ENCODE measurements at regions of chr12 and their contacts with region 1.

Region 1: GRCh38 chr12:109804820-109805761 is 28.1 kb downstream of the TRPV4 start:
- H3K4me3 Mint-ChIP-seq: no peak overlapping the region
- H3K27ac Mint-ChIP-seq: no peak overlapping the region
- H3K4me1 Mint-ChIP-seq: peaks cover 5% of the 10 kb centered on the region
- H3K27me3 Mint-ChIP-seq: peaks cover 4% of the 10 kb centered on the region

Region 2: GRCh38 chr12:109844983-109845823 is 40.1 kb after region 1 on chr12:
- intact Hi-C with region 1: loop called (anchors 1 kb)
- H3K4me3 Mint-ChIP-seq: peak overlapping the region; percentile 52
- H3K27ac Mint-ChIP-seq: no peak overlapping the region
- H3K4me1 Mint-ChIP-seq: peaks cover 61% of the 10 kb centered on the region
- H3K27me3 Mint-ChIP-seq: no peaks in the 10 kb centered on the region

Region 3: GRCh38 chr12:109880016-109880931 is 75.2 kb after region 1 on chr12 and contains the start of gene GLTP:
- intact Hi-C with region 1: loop called (anchors 1 kb)
- H3K4me3 Mint-ChIP-seq: peak within 1 kb of the TSS; percentile 93
- H3K27ac Mint-ChIP-seq: peak within 1 kb of the TSS; percentile 89
- H3K4me1 Mint-ChIP-seq: peaks cover 55% of the 10 kb centered on the region
- H3K27me3 Mint-ChIP-seq: peaks cover 4% of the 10 kb centered on the region

Measured in dendritic cell treated with granulocyte-macrophage colony-stimulating factor and Interleukin-4, amounts not matched to agents 40 ng/mL and 50 ng/mL, for 4 days (primary cell).